Mammary epithelial cell (primary cell): ENCODE measurements at regions of chr12 and their contacts with region 1.

Region 1: GRCh38 chr12:59113831-59114615 is 193.7 kb upstream of the LRIG3 start:
- DNase-seq: peak; percentile 60
- H3K4me3 ChIP-seq: no peak overlapping the region
- H3K27ac ChIP-seq: no peak overlapping the region
- H3K4me1 ChIP-seq: peaks cover 2% of the 10 kb centered on the region
- H3K27me3 ChIP-seq: no peaks in the 10 kb centered on the region
- CTCF ChIP-seq: peak; percentile 93 to 97

Region 2: GRCh38 chr12:57175428-57176138 is 1938.4 kb before region 1 on chr12:
- CTCF ChIA-PET with region 1: no interaction called
- dilution Hi-C with region 1: no loop called
- in situ Hi-C with region 1: no loop called
- intact Hi-C with region 1: no loop called
- DNase-seq: peak; percentile 95
- H3K4me3 ChIP-seq: peak overlapping the region in 2 of 3 experiments; percentile 28 to 31
- H3K27ac ChIP-seq: peak overlapping the region; percentile 5
- H3K4me1 ChIP-seq: peaks cover 30% of the 10 kb centered on the region
- H3K27me3 ChIP-seq: no peaks in the 10 kb centered on the region
- CTCF ChIP-seq: peak; percentile 86 to 91

Region 3: DNA sequence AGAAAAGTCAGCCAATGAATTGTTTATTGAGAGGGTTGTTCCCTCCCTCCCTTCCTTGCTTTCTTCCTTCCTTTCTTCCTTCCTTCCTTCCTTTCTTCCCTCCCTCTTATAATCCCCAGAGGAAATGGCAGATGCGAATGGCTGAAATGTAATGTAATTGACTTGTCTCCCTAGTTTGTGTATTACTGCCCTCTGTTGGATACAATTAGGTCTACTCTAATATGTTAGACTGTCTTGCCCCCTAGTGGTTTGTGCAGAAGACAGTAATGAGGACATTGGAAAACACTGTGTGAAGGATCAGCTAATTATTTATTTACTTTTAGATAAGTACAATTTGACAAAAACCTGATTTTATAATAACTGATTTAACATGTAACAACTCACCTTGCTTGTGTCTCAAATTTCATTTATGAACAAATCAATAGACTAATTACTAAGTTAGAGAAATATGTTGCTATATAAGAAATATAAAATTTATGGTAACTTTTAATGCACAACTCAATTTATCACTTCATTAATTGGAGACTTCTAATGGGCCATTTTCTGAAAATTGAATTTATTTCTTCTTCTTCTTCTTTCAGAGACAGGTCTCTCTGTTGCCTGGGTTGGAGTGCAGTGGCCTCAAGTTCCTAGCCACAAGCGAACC is 36.1 kb after region 1 on chr12:
- CTCF ChIA-PET with region 1: no interaction called
- dilution Hi-C with region 1: no loop called
- in situ Hi-C with region 1: no loop called
- intact Hi-C with region 1: loop called (anchors 1 kb)
- DNase-seq: peak; percentile 68
- H3K4me3 ChIP-seq: no peak overlapping the region
- H3K27ac ChIP-seq: no peak overlapping the region
- H3K4me1 ChIP-seq: no peaks in the 10 kb centered on the region
- H3K27me3 ChIP-seq: no peaks in the 10 kb centered on the region
- CTCF ChIP-seq: peak; percentile 98 to 99

Region 4: DNA sequence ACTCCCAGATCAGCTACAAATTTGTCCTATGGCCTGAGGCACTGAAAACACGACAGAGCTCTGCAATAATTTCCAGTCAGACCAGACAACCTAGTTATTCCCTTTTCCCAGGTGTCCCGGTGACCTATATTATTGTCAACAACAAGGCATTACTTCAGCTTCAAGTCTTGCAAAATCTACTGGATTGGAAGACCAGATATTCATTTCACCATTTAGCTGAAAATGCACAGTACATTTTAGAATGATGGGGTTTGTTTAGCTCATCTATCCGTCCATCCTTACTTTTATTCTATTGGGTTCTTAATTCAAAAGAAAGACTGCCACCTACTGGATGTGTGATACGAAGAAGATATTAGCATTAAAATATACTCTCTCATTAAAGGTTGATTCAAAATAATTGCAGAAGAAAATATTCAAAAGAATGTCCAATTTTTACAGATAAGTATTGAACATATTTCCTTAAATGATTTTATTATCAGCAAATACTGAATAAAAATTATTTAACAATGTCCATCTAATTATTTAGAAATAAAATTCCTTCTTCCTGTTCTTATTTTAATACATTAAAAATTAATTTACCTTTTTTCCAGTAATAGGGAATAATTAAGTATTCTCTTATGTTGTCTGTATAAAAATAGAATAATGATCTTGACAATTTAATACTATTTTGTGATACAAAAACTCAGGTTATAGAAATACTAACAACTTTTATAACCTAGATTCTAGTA is 51.1 kb after region 1 on chr12:
- CTCF ChIA-PET with region 1: no interaction called
- dilution Hi-C with region 1: no loop called
- in situ Hi-C with region 1: no loop called
- intact Hi-C with region 1: loop called (anchors 1 kb)
- DNase-seq: peak; percentile 36
- H3K4me3 ChIP-seq: no peak overlapping the region
- H3K27ac ChIP-seq: no peak overlapping the region
- H3K4me1 ChIP-seq: no peaks in the 10 kb centered on the region
- H3K27me3 ChIP-seq: no peaks in the 10 kb centered on the region
- CTCF ChIP-seq: peak; percentile 47 to 65

Region 5: GRCh38 chr12:59182191-59182590 is 68.2 kb after region 1 on chr12:
- CTCF ChIA-PET with region 1: no interaction called
- dilution Hi-C with region 1: no loop called
- in situ Hi-C with region 1: no loop called
- intact Hi-C with region 1: no loop called
- DNase-seq: peak; percentile 69
- H3K4me3 ChIP-seq: no peak overlapping the region
- H3K27ac ChIP-seq: no peak overlapping the region
- H3K4me1 ChIP-seq: peaks cover 8% of the 10 kb centered on the region
- H3K27me3 ChIP-seq: no peaks in the 10 kb centered on the region
- CTCF ChIP-seq: no peak

Region 6: DNA sequence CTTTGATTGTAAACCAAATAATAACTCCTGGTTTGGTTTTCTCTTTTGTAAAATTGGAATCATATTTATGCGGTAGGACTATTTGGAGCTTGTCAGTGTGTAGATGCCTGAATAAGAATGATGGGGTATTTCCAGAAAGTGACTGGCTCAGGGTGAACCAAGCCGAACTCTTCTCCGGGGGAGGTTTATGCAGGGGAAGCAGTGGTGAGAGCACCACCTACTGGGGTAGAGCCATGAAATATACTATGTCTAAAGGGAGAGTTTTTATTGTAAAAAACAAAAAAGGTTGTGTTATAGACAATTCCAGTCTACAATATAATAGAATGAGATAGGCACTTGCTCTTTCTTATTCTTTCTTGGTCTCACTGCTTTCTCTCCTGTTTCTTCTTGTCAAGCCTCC is 258.9 kb after region 1 on chr12:
- CTCF ChIA-PET with region 1: no interaction called
- dilution Hi-C with region 1: no loop called
- in situ Hi-C with region 1: no loop called
- intact Hi-C with region 1: loop called (anchors 1 kb)
- DNase-seq: peak; percentile 31
- H3K4me3 ChIP-seq: no peak overlapping the region
- H3K27ac ChIP-seq: no peak overlapping the region
- H3K4me1 ChIP-seq: no peaks in the 10 kb centered on the region
- H3K27me3 ChIP-seq: no peaks in the 10 kb centered on the region
- CTCF ChIP-seq: peak; percentile 38 to 57

Region 7: GRCh38 chr12:59403259-59403932 is 289.4 kb after region 1 on chr12:
- CTCF ChIA-PET with region 1: no interaction called
- dilution Hi-C with region 1: no loop called
- in situ Hi-C with region 1: no loop called
- intact Hi-C with region 1: loop called (anchors 10 kb)
- DNase-seq: peak; percentile 42
- H3K4me3 ChIP-seq: peak overlapping the region in 1 of 3 experiments; percentile 29
- H3K27ac ChIP-seq: no peak overlapping the region
- H3K4me1 ChIP-seq: peaks cover 4% of the 10 kb centered on the region
- H3K27me3 ChIP-seq: no peaks in the 10 kb centered on the region
- CTCF ChIP-seq: peak; percentile 85 to 90